Dorsolateral prefrontal cortex (tissue), 120 donors: ENCODE measurements at regions of chr12 and their contacts with region 1.

Region 1: GRCh38 chr12:116599285-116600136 is 40.3 kb downstream of the MAP1LC3B2 start:
- DNase-seq: peak; percentile 51 to 78 (median 66)
- H3K4me3 ChIP-seq: peak overlapping the region; percentile 5 to 66 (median 42)
- H3K27ac ChIP-seq: peak overlapping the region in 48 of 59 donors; percentile 5 to 78 (median 60)
- H3K27me3 ChIP-seq: peaks cover 0 to 4% (median 0%) of the 10 kb centered on the region in 45 donors
- CTCF ChIP-seq: peak in 55 of 56 donors; percentile 42 to 79 (median 64)

Region 2: GRCh38 chr12:115998119-115998633 is 601.3 kb before region 1 on chr12:
- intact Hi-C with region 1: loop called in 1 of 2 experiments (anchors 10 kb)
- DNase-seq: no peak
- H3K4me3 ChIP-seq: no peak overlapping the region
- H3K27ac ChIP-seq: peak overlapping the region in 1 of 59 donors; percentile 10
- H3K27me3 ChIP-seq: no peaks in the 10 kb centered on the region
- CTCF ChIP-seq: peak; percentile 74 to 98 (median 90)

Region 3: DNA sequence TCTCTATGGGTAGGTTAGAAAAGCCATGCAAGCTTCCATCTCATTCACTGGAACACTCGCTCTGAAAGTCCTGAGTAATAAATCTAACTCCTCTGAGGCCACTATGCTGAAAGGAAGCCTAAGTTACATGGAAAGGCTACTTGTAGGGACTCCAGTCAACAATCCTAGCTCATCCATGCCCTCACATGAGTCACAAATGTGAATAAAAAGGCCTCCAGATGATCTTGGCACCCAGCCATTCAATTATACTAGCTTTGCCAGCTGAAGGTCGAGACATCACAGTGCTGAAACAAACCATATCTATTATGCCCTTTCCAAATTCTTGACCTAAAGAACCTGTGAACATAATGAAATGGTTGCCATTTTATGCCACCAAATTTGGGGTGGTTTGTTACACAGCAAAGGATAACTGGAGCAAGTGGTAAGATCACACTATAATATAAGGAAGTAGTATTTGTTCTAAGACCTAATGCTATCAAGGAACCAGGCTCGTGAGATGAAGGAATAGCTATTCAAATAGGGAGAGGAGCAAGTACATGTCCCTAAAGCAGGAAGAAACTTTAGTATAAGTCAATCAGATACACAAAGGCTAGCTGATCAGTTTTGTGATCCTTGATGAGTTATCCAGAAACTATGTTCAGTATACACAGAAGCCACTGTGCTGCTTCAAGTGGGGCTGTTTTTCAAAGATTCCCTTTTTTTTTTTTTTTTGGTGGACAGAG is 464.1 kb before region 1 on chr12:
- intact Hi-C with region 1: loop called (anchors 10 kb)
- DNase-seq: no peak
- H3K4me3 ChIP-seq: no peak overlapping the region
- H3K27ac ChIP-seq: peak overlapping the region in 4 of 59 donors; percentile 15 to 48 (median 35)
- H3K27me3 ChIP-seq: no peaks in the 10 kb centered on the region
- CTCF ChIP-seq: no peak

Region 4: DNA sequence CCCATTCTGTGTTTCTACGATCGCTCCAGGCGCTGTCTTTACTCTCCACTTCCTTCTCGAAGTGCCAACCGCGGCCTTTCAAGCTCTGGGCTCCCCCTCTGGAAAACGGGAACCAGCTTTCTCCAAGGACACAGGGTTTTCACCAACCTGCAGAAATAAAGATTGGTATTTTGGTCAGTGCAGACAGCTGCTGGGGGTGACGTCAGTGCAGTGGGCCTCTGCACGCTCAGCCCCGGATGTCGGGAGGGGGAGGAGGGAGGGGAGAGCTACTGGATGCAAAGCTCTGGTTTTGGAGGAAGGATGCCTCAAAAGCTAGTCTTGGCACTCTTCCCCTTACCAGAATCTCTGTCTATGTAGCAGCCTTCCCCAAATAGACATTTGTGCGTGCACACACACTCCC is 261.8 kb after region 1 on chr12:
- intact Hi-C with region 1: no loop called
- DNase-seq: peak; percentile 26 to 89 (median 82)
- H3K4me3 ChIP-seq: peak overlapping the region in 57 of 59 donors; percentile 1 to 66 (median 43)
- H3K27ac ChIP-seq: peak overlapping the region in 57 of 59 donors; percentile 28 to 89 (median 78)
- H3K27me3 ChIP-seq: peaks cover 0 to 3% (median 0%) of the 10 kb centered on the region in 45 donors
- CTCF ChIP-seq: no peak